Endothelial cell of umbilical vein (primary cell): ENCODE measurements at regions of chr7 and their contacts with region 1.

Region 1: DNA sequence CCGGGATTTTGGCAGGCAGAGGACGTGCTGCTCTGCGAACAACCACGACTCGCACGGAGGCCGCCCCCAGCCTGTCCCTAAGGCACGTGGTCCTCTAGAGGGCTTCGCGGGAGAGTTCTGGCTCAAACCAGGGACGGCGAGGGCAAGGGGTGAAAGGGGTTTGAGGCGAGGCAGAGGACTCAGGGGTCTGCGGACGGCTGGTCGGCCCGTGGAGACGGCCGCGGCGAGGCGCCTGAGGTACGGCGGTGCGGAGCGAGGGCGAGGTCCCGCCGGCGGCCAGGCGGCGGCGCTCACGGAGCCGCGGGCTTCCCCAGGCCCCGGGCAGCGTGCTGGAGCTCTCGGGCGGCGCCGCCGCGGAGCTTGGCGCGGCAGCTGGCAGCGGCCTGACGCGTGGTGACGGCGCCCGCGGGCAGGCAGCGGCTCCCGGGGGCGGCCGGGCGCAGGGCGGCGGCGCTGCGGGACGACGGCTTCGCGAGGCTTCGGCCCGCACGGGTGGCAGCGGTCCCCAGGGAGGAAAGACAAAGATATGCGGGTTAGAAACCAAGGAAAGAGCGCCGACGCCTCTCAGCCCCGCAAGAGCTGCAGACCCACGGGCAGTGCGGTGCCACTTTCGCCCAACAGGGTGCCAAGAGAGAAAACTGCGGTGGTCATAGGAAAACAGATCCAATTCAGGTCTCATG is 44.8 kb downstream of the ZNF800 start:
- DNase-seq: peak; percentile 70
- H3K4me3 ChIP-seq: peak overlapping the region; percentile 29 to 63 (median 35)
- H3K27ac ChIP-seq: no peak overlapping the region
- H3K4me1 ChIP-seq: peaks cover 8% of the 10 kb centered on the region
- H3K27me3 ChIP-seq: no peaks in the 10 kb centered on the region
- CTCF ChIP-seq: peak; percentile 51 to 56
- POLR2A ChIP-seq: no peak

Region 2: DNA sequence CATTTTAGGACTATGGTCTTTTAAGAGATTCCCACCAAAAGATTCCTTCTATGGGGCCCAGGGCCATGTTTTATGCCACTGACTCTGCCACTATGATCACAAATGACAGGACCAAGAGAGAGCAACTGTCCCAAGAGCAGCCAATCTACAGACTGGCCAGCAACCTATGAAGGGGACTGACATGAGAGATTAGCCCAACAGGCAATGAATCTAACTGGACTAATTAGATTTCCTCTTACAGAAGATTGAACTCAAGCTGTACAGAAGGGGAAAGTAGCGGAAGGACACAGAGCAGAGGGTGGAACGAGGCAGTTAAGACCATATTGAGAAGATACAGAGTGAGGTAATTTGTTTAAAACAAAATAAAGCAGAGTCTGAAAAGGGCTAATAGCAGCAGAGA is 19.0 kb after region 1 on chr7:
- CTCF ChIA-PET with region 1: interaction called, 23 read pairs
- POLR2A ChIA-PET with region 1: no interaction called
- dilution Hi-C with region 1: no loop called
- intact Hi-C with region 1: no loop called
- DNase-seq: no peak
- H3K4me3 ChIP-seq: no peak overlapping the region
- H3K27ac ChIP-seq: no peak overlapping the region
- H3K4me1 ChIP-seq: no peaks in the 10 kb centered on the region
- H3K27me3 ChIP-seq: no peaks in the 10 kb centered on the region
- CTCF ChIP-seq: no peak
- POLR2A ChIP-seq: no peak

Region 3: DNA sequence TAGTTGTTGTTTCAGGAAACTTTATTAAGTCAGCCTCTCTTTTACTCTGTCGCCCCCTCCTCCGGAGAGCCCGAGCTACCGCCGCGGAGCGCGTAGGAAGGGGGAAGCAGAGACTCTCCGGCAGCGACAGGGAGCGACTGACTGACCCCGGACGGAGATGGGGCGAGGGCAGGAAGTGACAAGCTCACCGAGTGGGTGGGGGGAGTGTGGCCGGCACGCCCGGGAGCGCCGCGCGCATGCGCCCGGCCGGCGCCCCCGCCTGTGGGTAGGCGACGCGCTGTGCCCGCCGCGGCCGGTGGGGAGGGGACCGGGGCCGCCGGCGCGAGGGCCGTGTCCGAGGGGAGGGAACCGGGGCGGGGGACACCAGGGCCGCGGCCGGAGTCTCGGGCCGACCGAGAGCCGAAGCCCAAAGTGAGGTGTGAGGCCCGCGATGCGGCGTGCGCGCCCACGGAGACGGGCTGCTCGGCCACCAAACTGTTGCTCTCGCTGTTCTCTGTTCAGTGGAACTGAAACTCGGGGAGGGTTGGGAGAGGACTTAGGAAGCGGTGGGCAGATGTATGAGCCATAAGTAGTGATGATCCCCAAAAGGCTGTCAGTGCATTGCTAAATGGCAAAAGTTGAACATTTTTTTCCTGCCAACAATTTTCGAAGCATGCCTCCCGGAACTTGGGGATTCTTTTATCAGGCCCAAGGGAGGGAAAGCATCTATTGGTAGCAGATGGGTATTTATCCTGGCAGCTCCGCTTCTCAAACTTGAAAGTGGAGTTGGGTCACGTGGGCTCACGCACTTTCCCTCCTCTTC is 45.1 kb after region 1 on chr7 and contains the start of gene ZNF800:
- CTCF ChIA-PET with region 1: interaction called, 28 read pairs
- POLR2A ChIA-PET with region 1: interaction called, 3 read pairs
- dilution Hi-C with region 1: no loop called
- intact Hi-C with region 1: loop called (anchors 2 kb)
- DNase-seq: peak; percentile 85
- H3K4me3 ChIP-seq: peak within 1 kb of the TSS; percentile 88 to 97 (median 88)
- H3K27ac ChIP-seq: peak within 1 kb of the TSS; percentile 90
- H3K4me1 ChIP-seq: peaks cover 20% of the 10 kb centered on the region
- H3K27me3 ChIP-seq: peaks cover 7 to 31% of the 10 kb centered on the region in 2 experiments
- CTCF ChIP-seq: no peak
- POLR2A ChIP-seq: peak; percentile 72
- total RNA-seq, gene ZNF800: 31.5 and 35.4 TPM in 2 replicates

Region 4: GRCh38 chr7:127447326-127447945 is 99.7 kb after region 1 on chr7:
- CTCF ChIA-PET with region 1: interaction called, 12 read pairs
- POLR2A ChIA-PET with region 1: no interaction called
- dilution Hi-C with region 1: no loop called
- intact Hi-C with region 1: loop called (anchors 1 kb)
- DNase-seq: peak; percentile 32
- H3K4me3 ChIP-seq: no peak overlapping the region
- H3K27ac ChIP-seq: no peak overlapping the region
- H3K4me1 ChIP-seq: no peaks in the 10 kb centered on the region
- H3K27me3 ChIP-seq: no peaks in the 10 kb centered on the region
- CTCF ChIP-seq: peak; percentile 47 to 60
- POLR2A ChIP-seq: no peak